ENCODE measurements at regions of chr2 and their contacts with region 1.

Region 1: DNA sequence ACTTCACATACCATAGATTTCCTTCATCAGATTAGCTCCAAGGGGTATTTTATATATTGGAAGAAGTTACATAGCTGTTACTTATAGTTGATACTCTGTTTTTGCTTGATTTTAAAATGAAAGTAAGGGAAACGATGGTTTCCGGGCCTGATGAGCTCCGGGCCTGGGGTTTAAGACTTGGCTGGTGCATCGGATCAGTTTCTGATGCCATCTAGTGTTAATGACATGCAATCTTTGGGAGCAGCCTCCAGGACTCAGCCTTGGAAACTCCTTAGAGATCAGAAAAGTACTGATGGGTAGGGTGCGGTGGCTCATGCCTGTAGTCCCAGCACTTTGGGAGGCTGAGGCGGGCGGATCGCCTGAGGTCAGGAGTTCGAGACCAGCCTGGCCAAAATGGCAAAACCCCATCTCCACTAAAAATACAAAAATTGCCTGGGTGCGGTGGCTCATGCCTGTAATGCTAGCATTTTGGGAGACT is 47.1 kb upstream of the CNOT11 start:
- H3K4me3 ChIP-seq: no peak overlapping the region; the same call in 1 of the 2 replicates
- H3K27ac ChIP-seq: no peak overlapping the region
- H3K4me1 ChIP-seq: no peaks in the 10 kb centered on the region
- CTCF ChIP-seq: peak; percentile 30; the same call in 1 of the 2 replicates

Region 2: GRCh38 chr2:101012706-101013181 is 192.8 kb before region 1 on chr2:
- CTCF ChIA-PET with region 1: interaction called, 18 read pairs
- POLR2A ChIA-PET with region 1: no interaction called
- H3K4me3 ChIP-seq: no peak overlapping the region
- H3K27ac ChIP-seq: no peak overlapping the region
- H3K4me1 ChIP-seq: no peaks in the 10 kb centered on the region
- CTCF ChIP-seq: peak; percentile 65

Region 3: DNA sequence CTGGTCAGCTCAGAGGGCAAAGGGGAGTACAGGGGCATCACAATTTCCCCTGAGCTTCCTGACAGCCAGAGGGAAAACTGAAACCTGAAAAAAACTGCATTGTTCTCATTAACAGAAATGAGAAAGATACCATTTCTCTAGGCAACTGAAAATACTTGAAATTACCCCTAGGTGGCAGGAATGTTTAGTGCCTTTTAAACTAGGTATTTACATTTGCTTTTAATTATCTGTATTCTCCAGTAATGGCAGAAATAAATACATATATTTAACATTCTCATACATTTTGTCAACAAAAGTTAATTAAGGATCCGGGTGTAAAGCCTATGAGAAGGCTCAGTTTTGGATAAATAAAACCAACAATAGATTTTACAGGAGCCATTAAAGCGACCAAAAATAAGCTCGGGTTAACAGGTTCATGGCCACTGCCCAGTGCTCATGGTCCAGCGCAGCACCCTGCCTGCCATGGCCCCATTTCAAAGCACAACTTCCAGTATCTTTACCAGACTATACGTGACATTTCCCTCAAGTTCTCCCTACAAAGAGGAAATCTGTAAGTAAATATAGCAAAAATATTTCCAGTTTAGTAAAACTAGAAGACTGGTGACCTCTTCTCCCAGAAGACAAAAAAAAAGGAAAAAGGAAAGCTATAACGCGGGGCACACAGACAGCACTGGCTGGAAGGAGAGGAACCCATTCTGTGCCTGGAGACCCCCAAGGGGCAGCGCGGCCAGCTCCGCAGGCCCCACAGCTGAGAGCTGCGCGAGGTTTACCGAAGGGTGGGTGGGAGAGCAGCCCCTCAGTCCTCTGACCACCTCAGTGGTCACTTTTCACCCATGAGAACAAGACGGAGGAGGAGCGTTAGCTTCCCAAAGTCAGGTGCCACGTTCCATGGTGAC is 168.8 kb before region 1 on chr2:
- CTCF ChIA-PET with region 1: interaction called, 38 read pairs
- POLR2A ChIA-PET with region 1: no interaction called
- H3K4me3 ChIP-seq: no peak overlapping the region
- H3K27ac ChIP-seq: no peak overlapping the region
- H3K4me1 ChIP-seq: no peaks in the 10 kb centered on the region
- CTCF ChIP-seq: no peak

Region 4: GRCh38 chr2:101113396-101114267 is 91.9 kb before region 1 on chr2:
- CTCF ChIA-PET with region 1: no interaction called
- POLR2A ChIA-PET with region 1: no interaction called
- H3K4me3 ChIP-seq: peak overlapping the region; percentile 7; the same call in 1 of the 2 replicates
- H3K27ac ChIP-seq: peak overlapping the region; percentile 71
- H3K4me1 ChIP-seq: peaks cover 34% of the 10 kb centered on the region
- CTCF ChIP-seq: no peak

Region 5: GRCh38 chr2:101219246-101219645 is 13.7 kb after region 1 on chr2:
- CTCF ChIA-PET with region 1: interaction called, 14 read pairs
- POLR2A ChIA-PET with region 1: interaction called, 4 read pairs
- H3K4me3 ChIP-seq: no peak overlapping the region
- H3K27ac ChIP-seq: no peak overlapping the region
- H3K4me1 ChIP-seq: no peaks in the 10 kb centered on the region
- CTCF ChIP-seq: no peak

Region 6: DNA sequence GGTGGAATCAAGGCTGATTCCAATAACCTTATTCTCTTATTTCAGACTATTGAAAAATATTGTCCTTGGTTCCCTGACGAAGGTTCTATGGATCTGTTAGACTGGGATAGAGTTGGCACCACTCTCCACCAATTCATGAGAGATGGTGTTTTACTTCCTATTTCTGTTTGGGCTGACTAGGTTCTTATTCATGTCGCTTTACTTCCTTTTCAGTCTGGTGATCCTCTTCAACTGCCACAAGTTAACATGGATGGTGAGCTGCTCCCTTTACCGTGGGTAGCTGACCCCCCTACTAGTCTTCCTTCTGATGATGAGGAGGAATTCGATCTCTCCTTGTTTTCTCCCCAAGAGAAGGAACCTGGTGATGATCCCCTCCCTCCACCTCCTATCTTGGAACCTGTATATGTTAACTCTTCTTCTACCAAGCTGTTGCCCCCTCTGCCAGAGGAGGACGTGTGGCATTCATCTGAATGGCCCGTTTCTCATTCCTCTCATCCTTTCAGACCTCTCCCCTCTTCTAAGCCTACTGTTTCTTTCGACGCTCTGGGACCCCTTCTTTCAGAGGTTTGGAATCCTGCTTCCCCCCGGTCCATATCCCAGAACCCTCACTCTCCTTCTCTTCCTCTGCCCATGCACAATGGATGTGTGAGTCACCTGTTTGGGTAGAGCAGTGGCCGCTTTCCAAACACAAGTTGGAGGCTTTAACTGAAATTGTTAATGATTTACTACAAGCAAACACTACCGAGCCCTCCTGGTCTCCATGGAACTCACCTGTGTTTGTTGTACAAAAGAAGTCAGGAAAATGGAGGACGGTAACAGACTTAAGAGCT is 33.6 kb after region 1 on chr2:
- CTCF ChIA-PET with region 1: no interaction called
- POLR2A ChIA-PET with region 1: no interaction called
- H3K4me3 ChIP-seq: no peak overlapping the region
- H3K27ac ChIP-seq: no peak overlapping the region
- H3K4me1 ChIP-seq: no peaks in the 10 kb centered on the region
- CTCF ChIP-seq: no peak

Region 7: DNA sequence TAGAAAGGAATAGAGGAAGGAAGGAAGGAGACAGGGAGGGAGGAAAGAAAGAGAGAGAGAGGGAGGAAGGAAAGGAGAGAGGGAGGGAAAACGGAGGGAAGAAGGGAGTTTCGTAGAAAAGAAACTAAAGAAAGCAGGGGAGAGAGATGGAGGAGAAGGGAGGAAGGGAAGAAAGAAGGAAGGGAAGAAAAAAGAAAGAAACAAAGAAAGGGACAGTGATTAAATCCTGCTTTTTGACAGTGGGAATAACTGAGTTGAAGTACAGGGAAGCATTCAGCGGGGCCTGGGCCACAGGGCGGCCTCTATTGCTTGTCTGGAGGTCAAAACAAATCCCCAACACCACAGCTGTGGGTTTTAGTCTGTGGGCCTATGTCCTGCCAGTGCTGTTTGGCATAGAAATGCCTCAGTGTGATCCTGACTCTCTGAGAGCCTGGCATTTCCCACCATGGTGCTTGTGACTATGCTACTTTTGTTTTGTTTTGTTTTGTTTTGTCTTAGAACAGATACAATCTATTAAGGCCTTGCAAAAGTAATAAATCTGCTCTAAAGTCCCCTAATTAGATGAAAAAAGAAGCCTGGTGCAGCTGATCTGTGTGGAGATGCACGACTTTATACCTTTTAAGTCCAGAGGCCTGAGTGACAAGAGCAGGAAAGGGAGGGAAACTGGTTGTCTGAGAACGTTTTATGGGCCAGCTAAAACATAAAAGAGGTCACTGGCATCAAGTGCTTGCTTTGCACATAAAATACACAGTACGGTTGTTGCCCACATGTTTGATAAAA is 1021.2 kb after region 1 on chr2:
- CTCF ChIA-PET with region 1: no interaction called
- POLR2A ChIA-PET with region 1: no interaction called
- H3K4me3 ChIP-seq: no peak overlapping the region
- H3K27ac ChIP-seq: no peak overlapping the region
- H3K4me1 ChIP-seq: no peaks in the 10 kb centered on the region
- CTCF ChIP-seq: no peak